ENCODE measurements at regions of chr11 and their contacts with region 1.

Region 1: DNA sequence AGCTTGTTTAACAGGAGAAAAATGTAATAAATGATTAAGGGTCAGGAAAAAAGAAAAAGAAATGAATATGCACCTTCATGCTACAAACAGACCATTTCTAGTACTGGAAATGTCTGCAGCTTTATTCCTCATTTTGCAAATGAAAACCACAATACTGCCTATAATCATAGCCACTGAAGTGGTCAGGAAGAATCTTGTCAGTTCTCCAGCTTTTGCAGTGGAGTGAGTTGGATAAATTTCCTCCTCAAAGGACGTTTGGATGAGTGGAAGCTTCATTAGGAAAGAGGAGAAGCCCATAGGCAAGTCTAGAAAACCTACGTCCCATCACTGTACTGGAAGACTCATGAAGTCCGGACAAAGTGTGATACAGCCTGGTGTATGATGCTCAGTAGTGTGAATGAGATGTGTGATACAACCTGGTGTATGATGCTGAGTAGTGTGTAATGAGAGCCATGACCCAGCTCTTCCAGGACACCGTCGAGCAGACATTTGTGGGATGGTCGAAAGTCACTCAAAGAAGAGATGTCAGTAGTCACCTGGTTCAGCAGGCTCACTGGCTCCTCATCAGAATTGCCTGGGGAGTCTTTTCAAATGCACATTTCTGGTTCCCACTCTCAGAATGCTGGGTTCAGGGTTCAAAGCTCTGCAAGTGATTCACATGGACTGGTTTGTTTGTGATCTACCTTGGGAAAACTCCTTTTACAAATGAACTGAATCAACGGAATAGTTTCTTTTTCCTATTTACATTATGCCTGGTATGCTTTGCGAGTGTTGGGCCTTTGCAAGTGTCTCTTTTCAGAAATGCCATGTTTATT is 101.3 kb downstream of the PDHX start:
- DNase-seq: no peak
- ATAC-seq: no peak
- H3K4me3 Mint-ChIP-seq: no peak overlapping the region
- H3K27ac Mint-ChIP-seq: no peak overlapping the region
- H3K4me1 Mint-ChIP-seq: peaks cover 17% of the 10 kb centered on the region
- H3K27me3 Mint-ChIP-seq: peaks cover 5% of the 10 kb centered on the region

Region 2: GRCh38 chr11:34953955-34954354 is 63.8 kb before region 1 on chr11:
- CTCF ChIA-PET with region 1: no interaction called
- DNase-seq: no peak
- ATAC-seq: no peak
- H3K4me3 Mint-ChIP-seq: no peak overlapping the region
- H3K27ac Mint-ChIP-seq: no peak overlapping the region
- H3K4me1 Mint-ChIP-seq: no peaks in the 10 kb centered on the region
- H3K27me3 Mint-ChIP-seq: no peaks in the 10 kb centered on the region

Region 3: DNA sequence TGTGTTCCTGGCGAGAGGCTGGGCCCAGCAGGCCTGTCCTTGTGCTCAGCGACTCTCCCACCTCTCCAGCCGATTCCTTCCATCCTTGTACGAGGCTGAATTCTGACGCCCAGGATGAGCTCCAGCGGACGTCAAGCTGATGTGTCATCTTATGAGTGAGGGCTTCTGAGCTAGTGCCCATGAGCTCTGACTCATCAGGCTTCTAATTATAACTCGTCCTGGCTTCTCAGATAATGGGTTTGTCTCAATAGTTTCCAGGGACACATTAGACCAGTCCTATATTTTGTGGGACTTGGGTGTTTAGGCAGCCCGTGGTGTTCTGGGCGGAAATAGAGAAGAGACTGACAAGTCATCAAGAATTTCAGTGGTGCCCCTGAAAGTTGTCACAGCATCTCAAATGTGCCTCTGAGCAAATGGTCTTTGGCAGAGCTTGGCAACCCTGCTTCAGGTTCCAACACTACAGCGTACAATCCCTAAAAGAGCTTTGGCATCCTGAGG is 13.0 kb after region 1 on chr11:
- CTCF ChIA-PET with region 1: interaction called, 13 read pairs
- DNase-seq: peak; percentile 58
- ATAC-seq: peak; percentile 88
- H3K4me3 Mint-ChIP-seq: peak overlapping the region; percentile 27
- H3K27ac Mint-ChIP-seq: peak overlapping the region; percentile 84
- H3K4me1 Mint-ChIP-seq: peaks cover 47% of the 10 kb centered on the region
- H3K27me3 Mint-ChIP-seq: no peaks in the 10 kb centered on the region

Region 4: GRCh38 chr11:35134403-35135148 is 116.8 kb after region 1 on chr11:
- CTCF ChIA-PET with region 1: no interaction called
- DNase-seq: no peak
- ATAC-seq: no peak
- H3K4me3 Mint-ChIP-seq: no peak overlapping the region
- H3K27ac Mint-ChIP-seq: peak overlapping the region; percentile 9
- H3K4me1 Mint-ChIP-seq: peaks cover 28% of the 10 kb centered on the region
- H3K27me3 Mint-ChIP-seq: peaks cover 15% of the 10 kb centered on the region

Measured in activated CD8-positive, alpha-beta memory T cell treated with anti-CD3 and anti-CD28 coated beads, Interleukin-2, amount 10 ng/mL, durations not matched to agents 7 days and 5 days (primary cell).